Heart right ventricle (tissue), 16 donors: ENCODE measurements at regions of chr15 and their contacts with region 1.

Region 1: DNA sequence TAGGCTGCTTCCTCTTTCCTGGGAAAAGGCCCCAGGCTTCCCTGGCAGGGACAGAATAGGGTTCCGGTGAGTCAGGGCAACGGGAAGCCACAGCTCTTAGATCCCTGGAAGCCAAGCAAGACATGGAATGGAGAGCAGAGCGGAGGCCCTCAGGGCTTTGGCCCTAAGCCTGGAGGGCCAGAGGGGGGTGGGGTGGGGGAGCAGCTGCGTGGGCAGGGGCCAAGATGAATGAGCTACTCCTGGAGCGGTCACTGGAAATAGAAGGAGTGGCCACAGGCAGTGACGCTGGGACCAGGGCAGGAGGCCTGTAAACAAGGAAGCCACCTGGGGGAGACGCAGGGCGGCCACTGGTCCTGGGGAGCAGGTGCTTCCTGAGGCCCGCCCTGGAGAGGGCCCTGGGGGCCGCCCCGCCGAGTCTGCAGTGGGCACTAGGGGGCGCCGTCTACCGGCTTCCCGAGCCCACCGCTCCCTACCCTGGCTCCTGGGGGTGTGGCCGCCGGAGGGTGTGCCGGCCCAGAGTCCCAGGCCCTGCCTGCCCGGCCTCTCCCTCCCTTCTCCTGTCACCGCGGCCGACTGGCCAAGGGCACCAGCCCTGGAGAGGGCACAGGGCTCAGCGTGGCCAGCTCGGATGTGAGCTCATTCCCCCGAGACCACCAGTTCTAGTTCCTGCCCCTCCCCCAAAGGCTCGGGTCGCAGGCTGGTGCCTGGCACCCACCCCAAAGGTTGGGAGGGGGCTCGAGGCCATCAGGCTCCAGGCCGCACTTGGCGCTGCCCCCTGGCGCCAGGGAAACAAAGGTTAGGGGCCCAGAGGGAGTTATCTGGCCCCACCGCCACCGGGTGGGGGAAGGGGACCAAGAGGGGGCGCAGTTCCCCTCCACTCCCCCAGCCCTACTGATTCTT is 12.1 kb downstream of the VPS18 start:
- DNase-seq: peak; percentile 90 to 95
- ATAC-seq: peak; percentile 79 to 92 (median 87)
- H3K4me3 ChIP-seq: peak overlapping the region; percentile 7 to 67 (median 57)
- H3K27ac ChIP-seq: peak overlapping the region; percentile 86 to 100 (median 98)
- H3K4me1 ChIP-seq: peaks cover 19 to 91% (median 66%) of the 10 kb centered on the region in 9 donors
- H3K27me3 ChIP-seq: no peaks in the 10 kb centered on the region
- CTCF ChIP-seq: peak; percentile 81 to 93 (median 90)

Region 2: DNA sequence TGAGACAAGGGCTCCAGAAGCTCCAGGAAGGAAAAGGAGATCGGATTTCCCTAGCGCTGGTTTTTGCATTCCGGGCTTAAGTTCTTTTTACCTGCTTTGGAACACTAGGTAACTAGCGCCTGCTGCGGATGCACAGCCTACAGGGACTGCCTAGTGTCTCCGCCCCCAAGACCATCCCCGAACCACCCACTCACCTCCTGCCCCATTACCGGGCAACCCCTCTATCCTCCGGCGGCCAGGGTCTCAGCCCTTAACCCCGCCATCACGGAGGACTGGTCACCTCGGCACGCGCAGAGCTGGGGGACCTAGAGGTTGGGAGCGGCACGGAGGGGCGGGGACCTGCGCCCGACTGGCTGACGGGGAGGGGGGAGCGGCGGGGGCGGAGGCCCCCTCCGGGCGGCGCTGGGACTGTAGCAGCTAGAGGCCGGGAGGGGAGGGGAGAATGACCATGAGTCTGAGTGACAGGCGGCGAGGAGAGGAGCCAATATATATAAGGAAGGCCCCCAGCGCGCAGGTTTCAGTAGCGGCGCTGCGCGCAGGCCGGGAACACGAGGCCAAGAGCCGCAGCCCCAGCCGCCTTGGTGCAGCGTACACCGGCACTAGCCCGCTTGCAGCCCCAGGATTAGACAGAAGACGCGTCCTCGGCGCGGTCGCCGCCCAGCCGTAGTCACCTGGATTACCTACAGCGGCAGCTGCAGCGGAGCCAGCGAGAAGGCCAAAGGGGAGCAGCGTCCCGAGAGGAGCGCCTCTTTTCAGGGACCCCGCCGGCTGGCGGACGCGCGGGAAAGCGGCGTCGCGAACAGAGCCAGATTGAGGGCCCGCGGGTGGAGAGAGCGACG is 22.7 kb after region 1 on chr15 and contains the start of gene DLL4:
- intact Hi-C with region 1: loop called in 6 of 10 experiments (anchors 1 to 2 kb)
- DNase-seq: peak; percentile 72 to 89
- ATAC-seq: peak; percentile 61 to 86 (median 77)
- H3K4me3 ChIP-seq: peak within 1 kb of the TSS; percentile 55 to 96 (median 74)
- H3K27ac ChIP-seq: peak within 1 kb of the TSS; percentile 77 to 96 (median 83)
- H3K4me1 ChIP-seq: peaks cover 15 to 77% (median 66%) of the 10 kb centered on the region in 9 donors
- H3K27me3 ChIP-seq: peaks cover 5 to 93% (median 33%) of the 10 kb centered on the region in 7 donors
- CTCF ChIP-seq: no peak
- total RNA-seq, gene DLL4: 6.5 to 24.8 (median 16.6) TPM

Region 3: GRCh38 chr15:40941528-40942336 is 35.4 kb after region 1 on chr15:
- intact Hi-C with region 1: loop called in 6 of 10 experiments (anchors 1 to 5 kb)
- DNase-seq: peak; percentile 84
- ATAC-seq: peak; percentile 64 to 87 (median 76)
- H3K4me3 ChIP-seq: peak overlapping the region in 9 of 10 donors; percentile 46 to 96 (median 63)
- H3K27ac ChIP-seq: peak overlapping the region; percentile 86 to 96 (median 93)
- H3K4me1 ChIP-seq: peaks cover 14 to 63% (median 55%) of the 10 kb centered on the region in 9 donors
- H3K27me3 ChIP-seq: no peaks in the 10 kb centered on the region
- CTCF ChIP-seq: peak; percentile 47 to 91 (median 69)

Region 4: GRCh38 chr15:41022487-41023090 is 116.2 kb after region 1 on chr15:
- intact Hi-C with region 1: loop called (anchors 1 to 5 kb)
- DNase-seq: peak in 1 of 2 donors; percentile 38
- ATAC-seq: peak; percentile 45 to 71 (median 54)
- H3K4me3 ChIP-seq: no peak overlapping the region
- H3K27ac ChIP-seq: no peak overlapping the region
- H3K4me1 ChIP-seq: peaks cover 2 to 61% (median 34%) of the 10 kb centered on the region in 9 donors
- H3K27me3 ChIP-seq: no peaks in the 10 kb centered on the region
- CTCF ChIP-seq: peak; percentile 45 to 85 (median 77)

Region 5: GRCh38 chr15:41116116-41116871 is 210.0 kb after region 1 on chr15 and contains the start of gene INO80:
- intact Hi-C with region 1: loop called in 3 of 10 experiments (anchors 10 kb)
- DNase-seq: peak; percentile 96 to 99
- ATAC-seq: peak; percentile 95 to 98 (median 97)
- H3K4me3 ChIP-seq: peak within 1 kb of the TSS; percentile 43 to 97 (median 82)
- H3K27ac ChIP-seq: peak within 1 kb of the TSS; percentile 96 to 100 (median 100)
- H3K4me1 ChIP-seq: peaks cover 0 to 38% (median 21%) of the 10 kb centered on the region in 9 donors
- H3K27me3 ChIP-seq: peaks cover 0 to under 1% (median 0%) of the 10 kb centered on the region in 7 donors
- CTCF ChIP-seq: peak in 1 of 9 donors; percentile 17
- total RNA-seq, gene INO80: 10.0 to 14.8 (median 12.2) TPM

Region 6: GRCh38 chr15:41180206-41180789 is 274.0 kb after region 1 on chr15:
- intact Hi-C with region 1: loop called in 8 of 10 experiments (anchors 1 to 5 kb)
- DNase-seq: no peak
- ATAC-seq: no peak
- H3K4me3 ChIP-seq: no peak overlapping the region
- H3K27ac ChIP-seq: no peak overlapping the region
- H3K4me1 ChIP-seq: no peaks in the 10 kb centered on the region
- H3K27me3 ChIP-seq: no peaks in the 10 kb centered on the region
- CTCF ChIP-seq: no peak

Region 7: DNA sequence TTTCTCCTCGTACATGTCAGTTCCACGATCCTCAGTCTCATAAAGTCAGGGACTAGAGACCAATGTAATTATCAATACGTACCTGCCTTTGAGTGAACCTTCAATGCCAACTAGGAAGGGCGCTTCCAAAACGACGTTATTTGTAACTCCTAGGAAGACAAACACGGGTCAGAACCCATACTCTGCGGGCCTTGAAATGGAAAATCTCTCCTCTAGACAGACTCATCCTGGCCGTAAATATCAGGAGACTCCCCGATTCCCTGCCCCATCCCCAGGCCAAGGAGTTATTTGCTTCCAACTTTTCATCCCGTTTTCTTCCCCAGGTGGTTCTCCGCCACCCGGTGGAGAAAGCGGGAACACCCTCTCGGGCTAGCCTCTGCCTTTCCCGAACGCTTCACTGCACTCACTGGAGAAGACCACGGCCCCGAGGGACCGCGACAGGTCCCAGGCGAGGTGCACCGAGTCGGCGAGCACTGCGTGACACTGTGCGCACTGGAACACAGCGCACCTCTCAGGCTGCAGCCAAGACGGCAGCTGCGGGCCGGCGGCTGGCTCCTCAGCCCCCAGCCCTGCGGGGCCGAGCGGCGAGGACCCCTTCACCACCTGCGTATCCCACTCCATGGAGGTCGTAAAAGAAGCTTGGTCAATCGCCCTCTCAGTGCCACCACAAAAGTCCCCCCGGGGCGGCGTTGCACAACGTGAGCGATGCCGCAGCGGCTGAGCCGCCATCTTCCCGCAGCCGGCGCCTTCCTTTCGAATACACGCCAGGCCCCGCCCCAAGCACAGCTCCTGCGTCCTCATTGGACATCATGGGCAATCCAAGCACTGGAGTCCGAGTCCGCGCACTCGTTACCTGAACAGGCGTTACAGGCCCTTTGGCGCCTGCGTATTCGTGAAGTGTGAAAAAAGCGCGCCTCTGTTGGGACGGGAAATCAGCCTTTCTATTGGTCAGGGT is 425.8 kb after region 1 on chr15 and contains the start of gene OIP5:
- intact Hi-C with region 1: loop called in 1 of 10 experiments (anchors 5 kb)
- DNase-seq: peak; percentile 95 to 97
- ATAC-seq: peak; percentile 99 to 100 (median 99)
- H3K4me3 ChIP-seq: peak within 1 kb of the TSS; percentile 73 to 96 (median 84)
- H3K27ac ChIP-seq: peak within 1 kb of the TSS in 7 of 10 donors; percentile 4 to 81 (median 42)
- H3K4me1 ChIP-seq: peaks cover 0 to 40% (median 11%) of the 10 kb centered on the region in 9 donors
- H3K27me3 ChIP-seq: no peaks in the 10 kb centered on the region
- CTCF ChIP-seq: peak in 8 of 9 donors; percentile 53 to 76 (median 72)
- total RNA-seq, gene OIP5: 0.18 to 1.0 (median 0.23) TPM in 5 of 10 donors, not detected in the others